ENCODE measurements at regions of chr6 and their contacts with region 1.

Region 1: DNA sequence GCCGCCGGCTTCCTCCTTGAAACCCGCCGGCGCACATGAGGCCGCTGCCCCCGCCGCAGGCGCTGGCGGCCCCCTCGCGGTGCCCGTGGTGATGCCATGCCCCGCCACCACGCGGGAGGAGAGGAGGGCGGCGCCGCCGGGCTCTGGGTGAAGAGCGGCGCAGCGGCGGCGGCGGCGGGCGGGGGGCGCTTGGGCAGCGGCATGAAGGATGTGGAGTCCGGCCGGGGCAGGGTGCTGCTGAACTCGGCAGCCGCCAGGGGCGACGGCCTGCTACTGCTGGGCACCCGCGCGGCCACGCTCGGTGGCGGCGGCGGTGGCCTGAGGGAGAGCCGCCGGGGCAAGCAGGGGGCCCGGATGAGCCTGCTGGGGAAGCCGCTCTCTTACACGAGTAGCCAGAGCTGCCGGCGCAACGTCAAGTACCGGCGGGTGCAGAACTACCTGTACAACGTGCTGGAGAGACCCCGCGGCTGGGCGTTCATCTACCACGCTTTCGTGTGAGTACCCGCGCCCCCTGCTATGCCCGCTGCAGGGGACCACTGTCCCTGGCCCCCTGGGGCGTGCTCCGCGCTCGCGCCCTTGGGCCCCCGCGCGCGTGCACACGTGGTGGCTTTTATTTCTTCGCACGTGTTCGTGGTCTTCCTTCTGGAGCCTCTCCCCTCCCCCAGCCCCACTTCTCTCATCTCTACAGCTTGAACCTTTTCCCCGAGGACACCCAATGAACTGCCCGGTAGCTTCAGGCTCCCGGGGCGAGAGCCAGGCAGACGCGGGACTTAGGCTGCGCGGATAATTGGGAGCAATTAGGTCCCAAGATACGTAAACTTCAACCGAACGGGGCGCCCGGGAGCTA is 453 bp downstream of the KCNQ5 start:
- DNase-seq: peak; percentile 51 to 72 (median 60)
- ATAC-seq: peak; percentile 72
- H3K4me3 ChIP-seq: peak overlapping the region; percentile 82
- H3K4me3 Mint-ChIP-seq: peak overlapping the region; percentile 90 to 98 (median 94)
- H3K27ac ChIP-seq: peak overlapping the region; percentile 52
- H3K27ac Mint-ChIP-seq: peak overlapping the region; percentile 23 to 88 (median 76)
- H3K4me1 ChIP-seq: peaks cover 14 to 27% of the 10 kb centered on the region in 2 donors
- H3K4me1 Mint-ChIP-seq: peaks cover 39 to 69% (median 51%) of the 10 kb centered on the region in 7 donors
- H3K27me3 ChIP-seq: no peaks in the 10 kb centered on the region
- H3K27me3 Mint-ChIP-seq: no peaks in the 10 kb centered on the region

Region 2: GRCh38 chr6:71288228-71289001 is 1333.9 kb before region 1 on chr6 and contains the start of gene OGFRL1:
- CTCF ChIA-PET with region 1: no interaction called
- POLR2A ChIA-PET with region 1: no interaction called
- intact Hi-C with region 1: loop called in 1 of 2 experiments (anchors 5 kb)
- DNase-seq: peak; percentile 45 to 74 (median 64)
- ATAC-seq: peak; percentile 94
- H3K4me3 ChIP-seq: peak within 1 kb of the TSS; percentile 68
- H3K4me3 Mint-ChIP-seq: peak within 1 kb of the TSS; percentile 76 to 88 (median 83)
- H3K27ac ChIP-seq: peak within 1 kb of the TSS; percentile 70
- H3K27ac Mint-ChIP-seq: peak within 1 kb of the TSS; percentile 78 to 93 (median 83)
- H3K4me1 ChIP-seq: peaks cover 5 to 26% of the 10 kb centered on the region in 2 donors
- H3K4me1 Mint-ChIP-seq: peaks cover 29 to 43% (median 35%) of the 10 kb centered on the region in 7 donors
- H3K27me3 ChIP-seq: no peaks in the 10 kb centered on the region
- H3K27me3 Mint-ChIP-seq: peaks cover 0 to 24% (median 0%) of the 10 kb centered on the region in 5 donors
- total RNA-seq, gene OGFRL1: 4.3 to 30.4 (median 4.7) TPM

Region 3: GRCh38 chr6:72286911-72287311 is 335.4 kb before region 1 on chr6:
- CTCF ChIA-PET with region 1: no interaction called
- POLR2A ChIA-PET with region 1: no interaction called
- intact Hi-C with region 1: no loop called
- DNase-seq: no peak
- ATAC-seq: no peak
- H3K4me3 ChIP-seq: no peak overlapping the region
- H3K4me3 Mint-ChIP-seq: no peak overlapping the region
- H3K27ac ChIP-seq: no peak overlapping the region
- H3K27ac Mint-ChIP-seq: no peak overlapping the region
- H3K4me1 ChIP-seq: no peaks in the 10 kb centered on the region
- H3K4me1 Mint-ChIP-seq: no peaks in the 10 kb centered on the region
- H3K27me3 ChIP-seq: no peaks in the 10 kb centered on the region
- H3K27me3 Mint-ChIP-seq: no peaks in the 10 kb centered on the region

Region 4: DNA sequence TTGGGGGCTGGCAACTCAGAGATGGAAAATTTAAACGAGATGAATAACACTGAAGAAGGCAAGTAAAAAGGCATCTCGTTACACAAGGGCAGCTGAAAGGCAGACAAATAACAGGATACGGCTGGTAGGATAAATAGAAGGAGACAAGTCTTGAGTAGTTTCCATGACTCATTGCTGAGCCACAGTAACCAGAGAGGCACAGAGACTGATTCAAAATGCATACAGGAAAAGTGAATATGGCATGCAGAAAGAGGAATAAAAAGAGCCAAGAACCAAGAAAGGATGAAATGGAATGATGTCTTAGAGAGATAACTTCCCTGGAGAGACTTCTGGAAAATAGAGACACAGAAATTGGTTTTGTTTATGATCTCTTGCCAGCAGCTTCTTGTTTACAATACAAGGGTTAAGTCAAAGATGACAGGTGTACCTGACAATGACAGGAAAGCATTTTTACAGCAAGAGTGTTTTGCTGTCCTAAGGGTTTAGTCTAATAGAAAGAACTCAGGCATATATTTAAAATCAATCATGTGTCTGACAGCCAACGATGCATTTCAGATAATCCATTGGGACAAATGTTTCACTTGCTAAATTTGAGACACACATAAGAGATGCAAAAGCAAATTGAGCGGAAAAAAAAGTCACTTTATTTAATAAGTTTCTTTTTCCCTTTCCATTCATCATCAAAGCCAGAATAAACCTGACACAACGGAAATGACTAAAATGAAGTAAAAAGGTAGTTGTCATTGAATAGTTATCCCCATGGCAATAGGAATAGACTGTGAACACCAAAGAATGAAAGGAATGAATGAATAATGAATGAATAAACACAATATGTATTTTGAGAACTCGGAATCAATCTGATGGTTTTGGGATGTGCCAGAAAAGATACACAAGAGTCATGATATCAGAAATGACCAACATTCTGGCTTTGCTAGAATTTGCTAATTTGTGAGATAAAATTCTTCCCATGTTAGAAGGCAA is 68.5 kb before region 1 on chr6:
- CTCF ChIA-PET with region 1: no interaction called
- POLR2A ChIA-PET with region 1: no interaction called
- intact Hi-C with region 1: loop called in 1 of 2 experiments (anchors 2 kb)
- DNase-seq: no peak
- ATAC-seq: no peak
- H3K4me3 ChIP-seq: no peak overlapping the region
- H3K4me3 Mint-ChIP-seq: no peak overlapping the region
- H3K27ac ChIP-seq: no peak overlapping the region
- H3K27ac Mint-ChIP-seq: no peak overlapping the region
- H3K4me1 ChIP-seq: no peaks in the 10 kb centered on the region
- H3K4me1 Mint-ChIP-seq: peaks cover 0 to 5% (median 0%) of the 10 kb centered on the region in 7 donors
- H3K27me3 ChIP-seq: peaks cover 0 to 3% of the 10 kb centered on the region in 2 donors
- H3K27me3 Mint-ChIP-seq: peaks cover 0 to 17% (median 3%) of the 10 kb centered on the region in 5 donors

Region 5: GRCh38 chr6:72769459-72770125 is 147.3 kb after region 1 on chr6:
- CTCF ChIA-PET with region 1: no interaction called
- POLR2A ChIA-PET with region 1: no interaction called
- intact Hi-C with region 1: loop called in 1 of 2 experiments (anchors 5 kb)
- DNase-seq: no peak
- ATAC-seq: no peak
- H3K4me3 ChIP-seq: no peak overlapping the region
- H3K4me3 Mint-ChIP-seq: no peak overlapping the region
- H3K27ac ChIP-seq: no peak overlapping the region
- H3K27ac Mint-ChIP-seq: no peak overlapping the region
- H3K4me1 ChIP-seq: no peaks in the 10 kb centered on the region
- H3K4me1 Mint-ChIP-seq: no peaks in the 10 kb centered on the region
- H3K27me3 ChIP-seq: no peaks in the 10 kb centered on the region
- H3K27me3 Mint-ChIP-seq: no peaks in the 10 kb centered on the region

Region 6: GRCh38 chr6:73073238-73073637 is 450.9 kb after region 1 on chr6:
- CTCF ChIA-PET with region 1: no interaction called
- POLR2A ChIA-PET with region 1: no interaction called
- intact Hi-C with region 1: no loop called
- DNase-seq: no peak
- ATAC-seq: no peak
- H3K4me3 ChIP-seq: no peak overlapping the region
- H3K4me3 Mint-ChIP-seq: no peak overlapping the region
- H3K27ac ChIP-seq: no peak overlapping the region
- H3K27ac Mint-ChIP-seq: no peak overlapping the region
- H3K4me1 ChIP-seq: no peaks in the 10 kb centered on the region
- H3K4me1 Mint-ChIP-seq: no peaks in the 10 kb centered on the region
- H3K27me3 ChIP-seq: no peaks in the 10 kb centered on the region
- H3K27me3 Mint-ChIP-seq: no peaks in the 10 kb centered on the region

Region 7: DNA sequence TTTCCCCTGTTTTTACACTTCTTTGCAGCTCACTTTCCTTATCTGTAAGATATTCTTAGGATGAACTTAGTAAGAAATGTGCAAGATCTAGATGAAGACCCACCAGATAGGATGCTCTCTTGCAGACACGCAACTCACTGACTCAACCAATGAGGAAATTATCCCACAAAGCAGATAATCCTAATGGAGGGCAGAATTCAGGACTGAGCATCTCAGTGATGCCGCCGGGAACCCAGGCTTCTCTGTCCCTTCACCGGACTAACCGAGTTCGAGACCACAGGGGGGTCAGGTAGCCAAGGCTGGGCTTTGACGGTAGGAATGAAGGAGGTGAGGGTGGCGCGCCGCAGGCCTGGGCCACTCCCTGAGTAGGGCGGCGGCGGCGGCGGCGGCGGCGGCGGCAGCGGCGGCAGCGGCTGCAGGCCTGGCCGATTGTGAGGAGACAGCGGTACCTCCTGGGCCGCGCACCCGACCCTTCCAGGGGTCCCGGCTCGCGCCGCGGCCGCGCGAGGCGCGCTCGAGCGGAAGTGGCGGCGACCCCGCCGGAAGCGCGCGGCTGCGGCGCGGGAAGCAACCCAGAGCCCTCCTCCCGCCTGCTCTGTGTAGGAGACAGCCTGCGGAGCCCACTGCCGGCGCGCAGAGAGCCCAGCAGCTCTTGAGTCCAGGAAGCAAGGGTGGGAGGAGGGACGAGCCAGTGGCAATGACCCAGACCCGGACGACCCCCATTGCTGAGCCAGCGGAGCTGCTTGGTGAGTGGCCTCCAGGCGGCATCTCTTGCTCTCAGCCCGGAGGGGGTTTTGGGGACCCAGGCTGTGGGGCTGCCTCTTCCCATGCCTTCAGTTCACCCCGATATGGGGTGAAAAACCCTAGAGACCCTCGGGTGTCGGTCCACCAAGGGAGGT is 640.6 kb after region 1 on chr6 and contains the start of gene KHDC1:
- CTCF ChIA-PET with region 1: no interaction called
- POLR2A ChIA-PET with region 1: interaction called, 5 read pairs
- intact Hi-C with region 1: loop called (anchors 2 kb)
- DNase-seq: peak; percentile 24 to 67 (median 55)
- ATAC-seq: peak; percentile 87
- H3K4me3 ChIP-seq: peak within 1 kb of the TSS; percentile 88
- H3K4me3 Mint-ChIP-seq: peak within 1 kb of the TSS; percentile 76 to 92 (median 86)
- H3K27ac ChIP-seq: peak within 1 kb of the TSS; percentile 69
- H3K27ac Mint-ChIP-seq: peak within 1 kb of the TSS; percentile 64 to 89 (median 81)
- H3K4me1 ChIP-seq: peaks cover 12 to 15% of the 10 kb centered on the region in 2 donors
- H3K4me1 Mint-ChIP-seq: peaks cover 18 to 40% (median 35%) of the 10 kb centered on the region in 7 donors
- H3K27me3 ChIP-seq: no peaks in the 10 kb centered on the region
- H3K27me3 Mint-ChIP-seq: no peaks in the 10 kb centered on the region
- total RNA-seq, gene KHDC1: 0.46 to 3.7 (median 0.66) TPM

Region 8: DNA sequence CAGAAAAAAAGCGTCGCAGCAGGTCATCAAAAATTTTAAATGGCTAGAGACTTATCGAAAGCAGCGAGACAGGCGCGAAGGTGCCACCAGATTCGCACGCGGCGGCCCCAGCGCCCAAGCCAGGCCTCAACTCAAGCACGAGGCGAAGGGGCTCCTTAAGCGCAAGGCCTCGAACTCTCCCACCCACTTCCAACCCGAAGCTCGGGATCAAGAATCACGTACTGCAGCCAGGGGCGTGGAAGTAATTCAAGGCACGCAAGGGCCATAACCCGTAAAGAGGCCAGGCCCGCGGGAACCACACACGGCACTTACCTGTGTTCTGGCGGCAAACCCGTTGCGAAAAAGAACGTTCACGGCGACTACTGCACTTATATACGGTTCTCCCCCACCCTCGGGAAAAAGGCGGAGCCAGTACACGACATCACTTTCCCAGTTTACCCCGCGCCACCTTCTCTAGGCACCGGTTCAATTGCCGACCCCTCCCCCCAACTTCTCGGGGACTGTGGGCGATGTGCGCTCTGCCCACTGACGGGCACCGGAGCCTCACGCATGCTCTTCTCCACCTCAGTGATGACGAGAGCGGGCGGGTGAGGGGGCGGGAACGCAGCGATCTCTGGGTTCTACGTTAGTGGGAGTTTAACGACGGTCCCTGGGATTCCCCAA is 898.5 kb after region 1 on chr6 and contains the start of gene EEF1A1:
- CTCF ChIA-PET with region 1: no interaction called
- POLR2A ChIA-PET with region 1: interaction called, 3 read pairs
- intact Hi-C with region 1: loop called (anchors 5 kb)
- DNase-seq: peak; percentile 91 to 100 (median 99)
- ATAC-seq: peak; percentile 90
- H3K4me3 ChIP-seq: peak within 1 kb of the TSS; percentile 98
- H3K4me3 Mint-ChIP-seq: peak within 1 kb of the TSS; percentile 89 to 99 (median 94)
- H3K27ac ChIP-seq: peak within 1 kb of the TSS; percentile 98
- H3K27ac Mint-ChIP-seq: peak within 1 kb of the TSS; percentile 94 to 99 (median 97)
- H3K4me1 ChIP-seq: peaks cover 42 to 47% of the 10 kb centered on the region in 2 donors
- H3K4me1 Mint-ChIP-seq: peaks cover 16 to 72% (median 58%) of the 10 kb centered on the region in 7 donors
- H3K27me3 ChIP-seq: no peaks in the 10 kb centered on the region
- H3K27me3 Mint-ChIP-seq: peaks cover 0 to 10% (median 0%) of the 10 kb centered on the region in 5 donors
- total RNA-seq, gene EEF1A1: 8,219 to 15,585 (median 15,428) TPM

Region 9: GRCh38 chr6:73653571-73654424 is 1031.5 kb after region 1 on chr6 and contains the start of gene SLC17A5:
- CTCF ChIA-PET with region 1: no interaction called
- POLR2A ChIA-PET with region 1: no interaction called
- intact Hi-C with region 1: loop called in 1 of 2 experiments (anchors 5 kb)
- DNase-seq: peak; percentile 76 to 89 (median 82)
- ATAC-seq: peak; percentile 95
- H3K4me3 ChIP-seq: peak within 1 kb of the TSS; percentile 99
- H3K4me3 Mint-ChIP-seq: peak within 1 kb of the TSS; percentile 95 to 100 (median 98)
- H3K27ac ChIP-seq: peak within 1 kb of the TSS; percentile 99
- H3K27ac Mint-ChIP-seq: peak within 1 kb of the TSS; percentile 90 to 99 (median 97)
- H3K4me1 ChIP-seq: peaks cover 10 to 13% of the 10 kb centered on the region in 2 donors
- H3K4me1 Mint-ChIP-seq: peaks cover 17 to 42% (median 37%) of the 10 kb centered on the region in 7 donors
- H3K27me3 ChIP-seq: no peaks in the 10 kb centered on the region
- H3K27me3 Mint-ChIP-seq: no peaks in the 10 kb centered on the region
- total RNA-seq, gene SLC17A5: 6.0 to 13.8 (median 8.9) TPM